ENCODE measurements at regions of chr3 and their contacts with region 1.

Region 1: GRCh38 chr3:188904670-188905069 is 267.1 kb upstream of the TPRG1 start:
- DNase-seq: no peak
- H3K4me3 ChIP-seq: no peak overlapping the region
- H3K27ac ChIP-seq: no peak overlapping the region
- H3K4me1 ChIP-seq: peaks cover 0 to 35% (median 24%) of the 10 kb centered on the region in 4 donors
- H3K27me3 ChIP-seq: no peaks in the 10 kb centered on the region
- CTCF ChIP-seq: no peak
- EP300 ChIP-seq: no peak
- POLR2A ChIP-seq: no peak

Region 2: DNA sequence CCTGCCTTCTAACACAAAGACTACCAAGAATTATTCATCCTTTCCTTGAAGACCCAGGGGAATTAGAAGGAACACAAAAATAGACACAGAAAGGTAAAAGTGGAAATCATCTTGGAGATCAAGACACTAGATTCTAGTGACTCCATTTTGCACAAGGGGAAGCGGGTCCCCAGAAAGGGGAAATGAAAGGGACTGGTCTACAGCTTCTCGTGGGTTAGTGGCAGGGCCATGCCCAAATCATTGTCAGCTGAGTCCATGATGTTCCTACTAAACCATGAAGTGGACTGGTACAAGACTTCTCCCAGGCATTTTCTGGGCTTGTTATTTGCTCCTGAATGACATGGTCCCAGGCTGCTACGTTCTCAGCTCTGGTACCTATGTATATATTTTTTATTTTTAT is 36.4 kb after region 1 on chr3:
- intact Hi-C with region 1: loop called (anchors 5 kb)
- DNase-seq: no peak
- H3K4me3 ChIP-seq: no peak overlapping the region
- H3K27ac ChIP-seq: peak overlapping the region; percentile 12 to 42 (median 34)
- H3K4me1 ChIP-seq: peaks cover 0 to 11% (median 0%) of the 10 kb centered on the region in 4 donors
- H3K27me3 ChIP-seq: no peaks in the 10 kb centered on the region
- CTCF ChIP-seq: no peak
- EP300 ChIP-seq: no peak
- POLR2A ChIP-seq: no peak

Measured in sigmoid colon (tissue), 7 donors.